BJ (cell line): ENCODE measurements at regions of chr14 and their contacts with region 1.

Region 1: DNA sequence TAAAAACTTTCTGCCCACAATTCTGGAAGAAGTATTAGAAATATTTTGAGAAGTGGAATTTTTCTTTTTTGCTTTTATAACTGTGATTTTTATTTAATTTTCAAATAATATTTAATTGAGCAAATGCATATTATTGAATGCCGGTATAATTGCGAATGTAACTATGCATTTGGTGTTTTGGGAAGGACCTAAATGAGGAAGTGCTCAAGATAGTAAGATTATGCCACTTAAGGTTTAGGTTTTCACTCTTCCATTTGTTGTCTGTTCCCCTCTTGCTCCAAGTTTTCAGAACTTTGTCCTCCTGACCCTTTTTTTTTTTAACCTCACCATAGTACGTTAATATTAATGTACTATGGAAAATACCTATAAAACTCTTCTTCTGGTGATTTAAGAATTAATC is 85.8 kb downstream of the KIAA0586 start:
- DNase-seq: no peak
- H3K4me3 ChIP-seq: no peak overlapping the region
- H3K27me3 ChIP-seq: no peaks in the 10 kb centered on the region
- CTCF ChIP-seq: no peak

Region 2: GRCh38 chr14:58353516-58354299 is 159.6 kb before region 1 on chr14:
- CTCF ChIA-PET with region 1: no interaction called
- POLR2A ChIA-PET with region 1: interaction called, 12 read pairs
- DNase-seq: no peak
- H3K4me3 ChIP-seq: no peak overlapping the region
- H3K27me3 ChIP-seq: no peaks in the 10 kb centered on the region
- CTCF ChIP-seq: no peak

Region 3: DNA sequence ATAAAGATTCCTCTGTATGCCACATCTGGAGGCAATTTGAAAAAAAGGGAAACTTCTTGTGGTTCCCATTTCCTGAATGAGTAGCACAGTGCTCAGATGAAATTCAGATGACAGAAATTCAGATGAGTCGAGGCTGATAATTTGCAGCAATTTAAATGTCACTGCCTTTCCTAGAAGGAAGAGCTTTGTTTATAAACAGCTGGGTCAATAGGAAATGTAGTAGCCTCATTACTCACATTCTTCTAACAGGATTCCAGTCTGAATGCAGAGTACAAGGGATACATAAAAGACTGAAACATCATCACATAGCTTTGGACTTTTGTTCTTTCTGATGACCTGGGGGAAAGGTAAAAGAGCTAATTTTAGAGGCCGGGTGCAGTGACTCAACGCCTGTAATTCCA is 113.2 kb after region 1 on chr14:
- CTCF ChIA-PET with region 1: no interaction called
- POLR2A ChIA-PET with region 1: interaction called, 12 read pairs
- DNase-seq: peak; percentile 61
- H3K4me3 ChIP-seq: no peak overlapping the region
- H3K27me3 ChIP-seq: no peaks in the 10 kb centered on the region; the same call in 1 of the 2 replicates
- CTCF ChIP-seq: no peak